ENCODE measurements at regions of chr2 and their contacts with region 1.

Region 1: GRCh38 chr2:95314964-95315611 is 17.9 kb downstream of the KCNIP3 start:
- DNase-seq: peak; percentile 34 to 48 (median 45)
- ATAC-seq: peak; percentile 79
- H3K4me3 ChIP-seq: no peak overlapping the region
- H3K27ac ChIP-seq: no peak overlapping the region
- H3K4me1 ChIP-seq: peaks cover 0 to 5% of the 10 kb centered on the region in 2 experiments; a peak in 1 of 5 replicates
- H3K27me3 ChIP-seq: peaks cover 6 to 76% of the 10 kb centered on the region in 2 experiments; a peak in 4 of 5 replicates
- CTCF ChIP-seq: peak; percentile 60 to 66 (median 62)
- EP300 ChIP-seq: no peak
- POLR2A ChIP-seq: no peak
- RAD21 ChIP-seq: peak; percentile 28 to 65; a peak in 2 of 4 replicates

Region 2: GRCh38 chr2:95185197-95185596 is 129.9 kb before region 1 on chr2:
- CTCF ChIA-PET with region 1: no interaction called
- POLR2A ChIA-PET with region 1: no interaction called
- in situ Hi-C with region 1: no loop called
- intact Hi-C with region 1: no loop called
- DNase-seq: no peak
- ATAC-seq: no peak
- H3K4me3 ChIP-seq: no peak overlapping the region
- H3K27ac ChIP-seq: no peak overlapping the region
- H3K4me1 ChIP-seq: no peaks in the 10 kb centered on the region
- H3K27me3 ChIP-seq: no peaks in the 10 kb centered on the region; a peak in 2 of 5 replicates
- CTCF ChIP-seq: no peak
- EP300 ChIP-seq: no peak
- POLR2A ChIP-seq: no peak
- RAD21 ChIP-seq: no peak

Region 3: GRCh38 chr2:95231723-95232122 is 83.4 kb before region 1 on chr2:
- CTCF ChIA-PET with region 1: interaction called, 6 read pairs
- POLR2A ChIA-PET with region 1: no interaction called
- in situ Hi-C with region 1: no loop called
- intact Hi-C with region 1: loop called (anchors 1 kb)
- DNase-seq: peak; percentile 57 to 75 (median 64)
- ATAC-seq: peak; percentile 86
- H3K4me3 ChIP-seq: no peak overlapping the region
- H3K27ac ChIP-seq: no peak overlapping the region
- H3K4me1 ChIP-seq: no peaks in the 10 kb centered on the region
- H3K27me3 ChIP-seq: peaks cover 0 to 8% of the 10 kb centered on the region in 2 experiments; a peak in 3 of 5 replicates
- CTCF ChIP-seq: peak; percentile 78 to 89 (median 87)
- EP300 ChIP-seq: no peak
- POLR2A ChIP-seq: no peak
- RAD21 ChIP-seq: peak; percentile 41 to 74

Region 4: DNA sequence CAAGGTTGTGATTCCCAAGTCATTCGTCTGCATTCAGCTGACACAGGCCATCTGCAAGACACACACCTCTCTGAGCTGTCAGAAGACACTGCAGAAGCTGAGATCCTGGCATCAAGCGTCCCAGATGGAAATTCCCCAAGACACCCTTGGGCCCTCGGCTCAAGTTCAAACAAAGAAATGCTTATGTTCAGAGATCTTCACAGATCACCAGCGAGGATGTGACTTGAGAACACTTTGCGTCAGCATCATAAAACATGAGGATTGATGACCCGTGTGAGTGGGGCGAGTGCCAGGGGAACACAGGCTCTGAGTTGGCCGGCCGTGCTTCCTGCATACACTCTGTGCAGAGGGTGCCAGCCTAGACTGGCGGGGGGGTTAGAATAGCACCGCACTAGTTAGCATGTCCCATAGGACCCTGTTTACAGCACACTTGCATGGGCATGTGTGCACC is 18.8 kb after region 1 on chr2:
- CTCF ChIA-PET with region 1: no interaction called
- POLR2A ChIA-PET with region 1: no interaction called
- in situ Hi-C with region 1: no loop called
- intact Hi-C with region 1: no loop called
- DNase-seq: no peak
- ATAC-seq: no peak
- H3K4me3 ChIP-seq: no peak overlapping the region
- H3K27ac ChIP-seq: no peak overlapping the region
- H3K4me1 ChIP-seq: peaks cover 0 to 3% of the 10 kb centered on the region in 2 experiments; a peak in 1 of 5 replicates
- H3K27me3 ChIP-seq: peaks cover 8 to 71% of the 10 kb centered on the region in 2 experiments; a peak in 4 of 5 replicates
- CTCF ChIP-seq: no peak
- EP300 ChIP-seq: no peak
- POLR2A ChIP-seq: no peak
- RAD21 ChIP-seq: no peak

Region 5: GRCh38 chr2:95552911-95553310 is 237.8 kb after region 1 on chr2:
- CTCF ChIA-PET with region 1: no interaction called
- POLR2A ChIA-PET with region 1: no interaction called
- in situ Hi-C with region 1: no loop called
- intact Hi-C with region 1: no loop called
- DNase-seq: peak in 1 of 4 experiments; percentile 27
- ATAC-seq: peak; percentile 59
- H3K4me3 ChIP-seq: no peak overlapping the region
- H3K27ac ChIP-seq: no peak overlapping the region
- H3K4me1 ChIP-seq: peaks cover 0 to 2% of the 10 kb centered on the region in 2 experiments; a peak in 2 of 5 replicates
- H3K27me3 ChIP-seq: no peaks in the 10 kb centered on the region
- CTCF ChIP-seq: no peak
- EP300 ChIP-seq: no peak
- POLR2A ChIP-seq: no peak
- RAD21 ChIP-seq: no peak

Measured in K562 (cell line).